Activated CD4-positive, alpha-beta memory T cell treated with anti-CD3 and anti-CD28 coated beads, Interleukin-2, amount 10 ng/mL, durations not matched to agents 7 days and 5 days (primary cell): ENCODE measurements at regions of chr18 and their contacts with region 1.

Region 1: DNA sequence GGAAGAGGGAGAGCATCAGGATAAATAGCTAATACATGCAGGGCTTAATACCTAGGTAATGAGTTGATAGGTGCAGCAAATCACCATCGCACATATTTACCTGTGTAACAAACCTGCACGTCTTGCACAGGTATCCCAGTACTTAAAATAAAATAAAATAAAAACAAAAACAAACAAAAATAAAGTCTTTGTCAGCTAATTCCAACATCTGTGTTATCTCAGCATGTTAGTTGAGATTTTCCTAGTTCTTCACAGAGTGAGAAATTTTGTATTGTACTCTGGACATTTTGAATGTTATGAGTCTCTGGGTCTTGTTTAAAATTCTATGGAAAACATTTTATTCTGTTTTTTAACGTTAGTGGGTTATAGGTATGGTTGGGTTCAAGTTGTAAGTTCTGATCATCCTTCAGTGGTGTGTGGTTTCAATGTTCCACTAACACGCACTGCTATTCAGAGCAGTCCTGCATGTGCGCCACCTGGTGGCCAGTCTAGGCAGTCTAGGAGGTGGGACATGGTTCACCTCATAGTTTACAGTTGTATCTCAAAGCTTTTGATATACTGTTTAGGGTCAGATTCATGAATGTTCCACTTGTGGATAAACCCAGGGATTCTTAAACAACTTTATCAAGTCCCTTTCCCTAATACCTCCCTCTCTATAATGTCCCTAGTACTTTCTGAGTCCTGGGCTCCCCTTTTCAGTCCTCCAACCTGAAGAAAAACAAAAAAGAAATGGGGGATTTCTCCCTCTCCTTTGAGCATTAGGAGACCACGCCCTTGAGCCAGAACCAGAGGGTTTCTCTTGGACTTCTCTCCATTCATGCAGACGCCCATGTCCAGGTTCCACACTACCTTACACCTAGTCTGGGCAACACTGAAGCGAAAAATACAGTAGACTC is 213.4 kb upstream of the GATA6 start:
- DNase-seq: peak; percentile 79
- H3K4me3 Mint-ChIP-seq: no peak overlapping the region
- H3K27ac Mint-ChIP-seq: no peak overlapping the region
- H3K4me1 Mint-ChIP-seq: no peaks in the 10 kb centered on the region
- H3K27me3 Mint-ChIP-seq: peaks cover 28% of the 10 kb centered on the region

Region 2: GRCh38 chr18:21489119-21489750 is 466.8 kb before region 1 on chr18:
- CTCF ChIA-PET with region 1: interaction called, 13 read pairs
- POLR2A ChIA-PET with region 1: no interaction called
- DNase-seq: peak; percentile 29
- H3K4me3 Mint-ChIP-seq: no peak overlapping the region
- H3K27ac Mint-ChIP-seq: no peak overlapping the region
- H3K4me1 Mint-ChIP-seq: peaks cover 4% of the 10 kb centered on the region
- H3K27me3 Mint-ChIP-seq: peaks cover 6% of the 10 kb centered on the region

Region 3: DNA sequence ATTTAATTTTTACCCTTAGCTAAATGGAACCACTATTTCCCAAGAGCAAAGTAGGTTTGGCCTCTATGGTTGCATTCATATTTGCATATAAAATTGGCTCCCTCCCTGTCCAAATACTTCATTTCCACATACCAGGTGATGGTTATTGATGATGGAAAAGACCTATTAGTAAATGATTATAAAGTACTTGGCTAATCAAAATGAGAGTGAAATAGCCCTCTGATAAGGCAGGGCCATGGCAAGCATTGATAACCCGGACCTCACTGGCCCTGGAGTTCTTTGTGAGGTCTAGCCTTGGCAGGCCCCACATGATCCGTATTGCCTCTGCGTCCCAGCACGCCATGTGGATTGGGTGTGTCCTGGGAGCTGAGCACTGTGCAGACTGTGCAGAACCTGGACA is 12.3 kb after region 1 on chr18:
- CTCF ChIA-PET with region 1: no interaction called
- POLR2A ChIA-PET with region 1: no interaction called
- DNase-seq: no peak
- H3K4me3 Mint-ChIP-seq: no peak overlapping the region
- H3K27ac Mint-ChIP-seq: no peak overlapping the region
- H3K4me1 Mint-ChIP-seq: no peaks in the 10 kb centered on the region
- H3K27me3 Mint-ChIP-seq: peaks cover 4% of the 10 kb centered on the region